ENCODE measurements at regions of chr4 and their contacts with region 1.

Region 1: GRCh38 chr4:31929676-31930345 is 1209.6 kb downstream of the PCDH7 start:
- DNase-seq: no peak
- H3K4me3 ChIP-seq: no peak overlapping the region
- H3K27ac ChIP-seq: no peak overlapping the region
- H3K4me1 ChIP-seq: no peaks in the 10 kb centered on the region
- H3K27me3 ChIP-seq: no peaks in the 10 kb centered on the region
- CTCF ChIP-seq: no peak
- POLR2A ChIP-seq: no peak

Region 2: DNA sequence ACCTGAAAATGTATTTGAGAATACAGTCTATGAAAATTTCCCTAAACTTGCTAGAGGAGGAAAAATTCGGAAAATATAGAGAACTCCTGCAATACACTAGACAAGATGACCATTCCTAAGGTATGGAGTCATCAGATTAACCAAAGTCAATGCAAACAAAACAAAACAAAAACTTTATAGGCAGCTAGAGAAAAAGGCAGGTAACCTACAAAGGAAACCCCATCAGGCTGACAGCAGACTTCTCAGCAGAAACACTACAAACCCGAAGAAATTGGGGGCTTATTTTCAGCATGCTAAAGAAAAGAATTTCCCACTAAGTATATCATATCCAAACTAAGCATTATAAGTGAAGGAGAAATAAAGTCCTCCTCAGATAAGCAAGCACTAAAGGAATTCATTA is 73.2 kb before region 1 on chr4:
- CTCF ChIA-PET with region 1: no interaction called
- POLR2A ChIA-PET with region 1: no interaction called
- dilution Hi-C with region 1: no loop called
- intact Hi-C with region 1: no loop called
- DNase-seq: no peak
- H3K4me3 ChIP-seq: no peak overlapping the region
- H3K27ac ChIP-seq: no peak overlapping the region
- H3K4me1 ChIP-seq: no peaks in the 10 kb centered on the region
- H3K27me3 ChIP-seq: no peaks in the 10 kb centered on the region
- CTCF ChIP-seq: no peak
- POLR2A ChIP-seq: no peak

Region 3: DNA sequence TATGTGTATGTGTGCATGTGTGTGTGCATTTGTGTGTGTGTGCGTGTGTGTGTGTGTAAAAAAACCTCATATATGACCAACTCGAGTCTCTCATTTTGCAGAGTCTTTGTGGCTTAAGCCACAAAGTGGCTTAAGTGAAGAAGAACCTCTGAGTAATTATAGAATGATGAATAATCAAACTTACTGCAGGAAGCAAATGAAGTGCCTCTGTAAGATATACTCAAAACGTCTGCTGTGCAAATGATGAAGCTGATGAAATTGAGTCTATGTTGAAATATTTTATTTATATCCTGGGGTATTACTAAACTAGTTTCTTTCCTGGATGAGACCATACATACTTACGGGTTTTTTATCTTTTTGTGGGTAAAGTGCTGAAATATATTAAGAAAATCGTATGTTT is 10.9 kb before region 1 on chr4:
- CTCF ChIA-PET with region 1: interaction called, 10 read pairs
- POLR2A ChIA-PET with region 1: no interaction called
- dilution Hi-C with region 1: no loop called
- intact Hi-C with region 1: no loop called
- DNase-seq: no peak
- H3K4me3 ChIP-seq: no peak overlapping the region
- H3K27ac ChIP-seq: no peak overlapping the region
- H3K4me1 ChIP-seq: no peaks in the 10 kb centered on the region
- H3K27me3 ChIP-seq: no peaks in the 10 kb centered on the region
- CTCF ChIP-seq: no peak
- POLR2A ChIP-seq: no peak

Measured in endothelial cell of umbilical vein (primary cell).